ENCODE measurements at regions of chr1 and their contacts with region 1.

Region 1: DNA sequence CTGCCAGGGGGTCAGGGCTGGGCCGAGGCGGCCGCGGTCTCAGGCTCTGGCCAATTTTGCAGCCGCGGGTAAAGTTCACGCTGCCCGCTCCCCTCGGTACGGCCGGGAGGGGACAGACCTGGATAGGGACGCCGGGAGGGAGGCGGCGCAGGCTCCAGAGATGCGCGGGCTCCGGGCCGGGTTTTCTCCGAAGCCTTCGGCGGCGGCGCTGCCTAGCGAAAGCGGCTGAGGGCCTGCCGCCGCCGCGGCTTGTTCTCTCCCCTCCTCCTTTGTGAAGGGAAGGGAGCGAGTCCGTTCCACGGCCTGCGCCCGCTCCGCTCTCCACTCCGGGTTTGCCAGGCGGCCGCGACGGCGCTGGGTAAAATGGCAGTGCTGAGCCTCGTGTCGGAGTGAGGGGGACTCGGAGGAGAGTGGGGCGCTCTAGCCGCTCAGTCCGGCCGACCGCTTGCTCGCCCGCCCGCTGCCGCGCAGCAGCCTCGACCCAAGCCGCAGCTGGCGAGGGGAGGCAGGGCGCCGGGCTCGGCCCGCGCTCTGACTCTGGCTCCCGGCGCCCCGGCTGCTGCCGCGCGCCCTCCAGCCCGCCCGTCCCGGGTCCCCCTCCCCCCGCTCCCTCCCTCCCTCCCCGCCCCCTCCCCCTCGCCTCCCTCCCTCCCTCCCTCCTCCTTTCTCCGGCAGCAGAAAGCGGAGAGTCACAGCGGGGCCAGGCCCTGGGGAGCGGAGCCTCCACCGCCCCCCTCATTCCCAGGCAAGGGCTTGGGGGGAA is at the start of gene ARID1A:
- DNase-seq: peak; percentile 98
- H3K4me3 ChIP-seq: peak within 1 kb of the TSS; percentile 84
- H3K27ac ChIP-seq: peak within 1 kb of the TSS; percentile 97
- H3K4me1 ChIP-seq: peaks cover 54% of the 10 kb centered on the region
- H3K27me3 ChIP-seq: no peaks in the 10 kb centered on the region
- CTCF ChIP-seq: no peak
- total RNA-seq, gene ARID1A: 120 and 123 TPM in 2 replicates

Region 2: DNA sequence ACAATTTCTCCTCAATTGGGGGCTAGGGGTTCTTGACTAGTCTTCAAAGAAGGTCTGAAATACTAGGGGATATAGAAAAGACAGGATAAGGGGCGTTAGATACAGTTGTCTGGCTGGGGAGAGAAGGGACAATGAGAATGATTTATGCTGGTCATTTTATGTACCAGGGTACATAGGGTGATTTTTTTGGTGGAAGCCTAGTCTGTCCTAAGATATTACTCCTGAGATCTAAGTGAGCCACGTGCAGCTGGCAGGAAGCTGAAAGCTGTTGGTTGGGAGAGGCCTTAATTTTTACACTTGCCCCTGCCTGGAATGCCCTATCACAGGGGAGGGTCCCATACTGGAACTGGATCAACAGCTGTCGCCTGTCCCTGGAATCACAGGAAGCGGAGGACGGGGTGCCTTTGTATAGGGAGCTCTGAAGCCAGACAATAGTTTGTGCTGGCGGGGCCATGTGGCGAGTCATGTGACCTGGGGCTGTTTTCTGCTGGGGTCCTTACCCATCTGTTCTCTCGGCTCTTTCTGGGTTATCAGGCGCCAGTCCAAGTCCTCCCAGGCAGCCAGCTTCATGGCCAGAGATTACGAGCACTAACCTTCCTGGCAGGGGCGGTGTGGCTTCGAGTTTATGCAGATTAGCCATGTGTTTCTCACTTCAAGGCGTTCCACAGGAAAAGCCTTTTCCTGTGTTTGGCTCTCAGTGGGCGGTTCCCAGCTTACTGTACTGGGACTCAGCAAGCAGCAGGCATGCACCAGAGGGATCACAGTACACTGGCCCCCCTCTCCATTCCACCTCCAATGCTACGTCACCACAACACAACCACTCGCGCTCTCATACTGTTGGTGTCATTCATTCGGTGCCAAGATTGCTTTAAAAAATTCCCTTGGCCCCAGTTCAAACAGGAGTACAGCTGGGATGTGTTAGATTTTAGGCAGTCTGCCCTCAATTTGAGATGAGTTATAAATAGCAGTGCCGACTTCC is 27.8 kb after region 1 on chr1:
- CTCF ChIA-PET with region 1: no interaction called
- POLR2A ChIA-PET with region 1: interaction called, 3 read pairs
- intact Hi-C with region 1: loop called (anchors 1 kb)
- DNase-seq: peak; percentile 99
- H3K4me3 ChIP-seq: peak overlapping the region; percentile 16
- H3K27ac ChIP-seq: peak overlapping the region; percentile 70
- H3K4me1 ChIP-seq: peaks cover 45% of the 10 kb centered on the region
- H3K27me3 ChIP-seq: no peaks in the 10 kb centered on the region
- CTCF ChIP-seq: no peak

Region 3: DNA sequence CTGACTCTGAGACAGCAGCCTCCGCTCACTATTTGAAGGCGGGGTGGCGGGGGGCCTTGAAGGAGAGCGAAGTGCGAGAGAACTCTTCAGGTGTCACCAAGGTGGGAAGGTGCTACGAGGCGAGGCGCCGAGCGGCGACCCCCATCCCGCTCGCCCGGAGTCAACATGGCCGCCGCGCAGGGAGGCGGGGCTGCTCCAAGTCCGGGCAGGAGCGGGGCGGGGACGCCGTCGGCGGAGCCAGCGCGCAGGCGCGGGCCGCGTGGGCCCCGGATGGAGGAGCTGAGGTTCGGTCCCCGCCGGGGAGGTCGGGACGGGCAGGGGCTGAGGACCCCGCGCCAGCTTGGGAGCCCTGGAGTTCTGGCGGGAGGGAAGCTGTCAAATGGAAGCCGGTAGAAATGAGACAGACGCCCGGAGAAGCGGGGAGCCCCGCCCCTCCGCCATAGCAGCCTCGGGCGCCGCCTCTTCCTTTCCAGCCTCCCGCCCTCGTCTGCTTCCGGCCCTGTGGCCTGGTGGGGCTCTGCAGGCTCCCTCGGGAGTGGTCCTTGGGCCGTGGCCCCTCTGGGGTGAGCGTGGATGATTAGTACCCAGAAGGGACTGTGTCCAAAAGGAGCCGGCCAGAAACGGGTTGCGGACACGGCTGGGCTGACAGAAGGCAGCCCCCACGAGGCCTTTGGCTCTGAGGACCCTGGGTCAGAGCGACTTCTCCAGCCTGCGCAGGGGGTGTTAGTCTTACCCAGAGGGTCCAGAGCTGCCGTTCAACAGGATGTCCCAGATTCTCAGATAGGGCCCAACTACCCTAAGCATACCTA is 92.4 kb after region 1 on chr1 and contains the start of gene PIGV:
- CTCF ChIA-PET with region 1: no interaction called
- POLR2A ChIA-PET with region 1: no interaction called
- intact Hi-C with region 1: loop called (anchors 5 kb)
- DNase-seq: peak; percentile 94
- H3K4me3 ChIP-seq: peak within 1 kb of the TSS; percentile 63
- H3K27ac ChIP-seq: peak within 1 kb of the TSS; percentile 97
- H3K4me1 ChIP-seq: peaks cover 29% of the 10 kb centered on the region
- H3K27me3 ChIP-seq: no peaks in the 10 kb centered on the region
- CTCF ChIP-seq: no peak
- total RNA-seq, gene PIGV: 4.9 and 9.1 TPM in 2 replicates

Measured in A673 (cell line).